ENCODE measurements at regions of chr19 and their contacts with region 1.

Region 1: DNA sequence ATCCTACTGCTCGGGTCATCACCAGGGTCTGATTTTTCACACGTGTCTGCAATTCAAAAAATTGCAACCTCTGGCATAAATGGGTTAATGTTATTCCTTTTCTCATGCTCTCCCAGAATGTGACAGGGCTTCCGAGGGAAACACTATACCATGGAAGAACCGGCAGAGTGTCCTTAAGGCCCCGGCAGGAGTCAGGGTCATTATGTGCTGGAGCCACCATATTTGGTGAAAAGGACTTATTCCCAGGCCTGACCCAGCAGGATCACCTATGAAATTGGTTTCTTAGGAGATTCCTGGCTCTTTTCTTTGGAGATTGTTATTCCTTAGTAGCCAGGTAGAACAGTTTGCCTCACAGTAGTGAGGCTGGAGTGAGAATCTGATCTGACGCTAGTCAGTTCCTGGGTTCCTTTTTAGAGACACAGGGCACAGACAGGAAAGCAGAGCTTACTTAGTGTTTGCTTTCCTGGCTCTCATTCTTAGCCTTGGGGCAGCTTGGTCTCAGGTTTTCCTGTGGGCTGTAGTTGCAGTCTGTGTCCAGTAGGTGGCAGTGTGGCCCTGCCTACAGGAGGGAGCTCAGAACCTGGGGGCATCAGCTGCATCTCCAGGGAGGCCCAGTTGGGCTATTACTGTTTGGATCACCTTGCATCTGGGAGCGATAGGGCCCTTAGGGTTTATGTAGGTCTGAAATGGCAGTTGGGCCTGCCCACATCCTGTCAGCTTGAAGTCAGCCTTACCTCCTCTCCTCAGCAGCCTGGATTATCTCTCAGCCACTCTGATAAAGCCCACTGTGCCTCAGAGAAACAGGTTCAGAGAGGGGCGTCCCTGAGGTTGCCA is 12.4 kb downstream of the SNRNP70 start:
- DNase-seq: peak; percentile 42 to 86 (median 66)
- ATAC-seq: peak; percentile 82 to 87 (median 84)
- H3K4me3 ChIP-seq: no peak overlapping the region
- H3K4me3 Mint-ChIP-seq: no peak overlapping the region
- H3K27ac ChIP-seq: no peak overlapping the region
- H3K27ac Mint-ChIP-seq: no peak overlapping the region
- H3K4me1 ChIP-seq: peaks cover 0 to 9% of the 10 kb centered on the region in 2 experiments
- H3K4me1 Mint-ChIP-seq: peaks cover 7 to 12% (median 8%) of the 10 kb centered on the region in 3 donors
- H3K27me3 ChIP-seq: no peaks in the 10 kb centered on the region
- H3K27me3 Mint-ChIP-seq: no peaks in the 10 kb centered on the region

Region 2: GRCh38 chr19:49113762-49114629 is 16.3 kb after region 1 on chr19 and contains the start of gene LIN7B:
- CTCF ChIA-PET with region 1: interaction called in 1 of 2 experiments, 15 read pairs
- POLR2A ChIA-PET with region 1: no interaction called
- DNase-seq: peak; percentile 45 to 90 (median 68)
- ATAC-seq: peak; percentile 65 to 70 (median 69)
- H3K4me3 ChIP-seq: peak within 1 kb of the TSS; percentile 60 to 73
- H3K4me3 Mint-ChIP-seq: peak within 1 kb of the TSS; percentile 79 to 85 (median 84)
- H3K27ac ChIP-seq: peak within 1 kb of the TSS; percentile 7
- H3K27ac Mint-ChIP-seq: peak within 1 kb of the TSS; percentile 86 to 89
- H3K4me1 ChIP-seq: peaks cover 6 to 34% of the 10 kb centered on the region in 2 experiments
- H3K4me1 Mint-ChIP-seq: peaks cover 36 to 46% (median 36%) of the 10 kb centered on the region in 3 donors
- H3K27me3 ChIP-seq: no peaks in the 10 kb centered on the region
- H3K27me3 Mint-ChIP-seq: no peaks in the 10 kb centered on the region
- total RNA-seq, gene LIN7B: 8.1 to 17.8 (median 12.9) TPM

Region 3: DNA sequence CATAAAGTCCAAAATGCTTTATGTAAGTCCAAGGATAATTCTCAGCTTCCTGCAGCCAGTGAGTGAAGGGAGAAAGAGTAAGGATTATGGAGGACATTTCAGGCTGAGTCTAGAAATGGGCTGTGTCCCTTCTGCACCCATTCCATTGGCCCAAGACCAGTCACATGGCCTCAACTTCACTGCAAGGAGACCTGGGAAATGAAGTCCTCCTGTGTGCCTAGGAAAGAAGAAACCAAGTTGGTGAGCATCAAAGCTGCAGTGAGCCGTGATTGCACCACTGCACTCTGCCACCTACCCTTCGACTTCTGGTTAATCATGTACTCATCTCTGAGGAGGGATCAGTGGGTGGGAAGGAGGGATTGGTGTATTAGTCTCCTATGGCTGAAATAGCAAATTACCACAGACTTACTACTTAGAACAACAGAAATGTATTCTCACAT is 234.0 kb after region 1 on chr19:
- CTCF ChIA-PET with region 1: no interaction called
- POLR2A ChIA-PET with region 1: no interaction called
- DNase-seq: peak; percentile 19 to 83 (median 60)
- ATAC-seq: peak; percentile 56 to 73 (median 58)
- H3K4me3 ChIP-seq: no peak overlapping the region
- H3K4me3 Mint-ChIP-seq: peak overlapping the region; percentile 6 to 96 (median 34)
- H3K27ac ChIP-seq: peak overlapping the region; percentile 35
- H3K27ac Mint-ChIP-seq: peak overlapping the region; percentile 97 to 99
- H3K4me1 ChIP-seq: peaks cover 29 to 53% of the 10 kb centered on the region in 2 experiments
- H3K4me1 Mint-ChIP-seq: peaks cover 73 to 84% (median 78%) of the 10 kb centered on the region in 3 donors
- H3K27me3 ChIP-seq: no peaks in the 10 kb centered on the region
- H3K27me3 Mint-ChIP-seq: no peaks in the 10 kb centered on the region

Region 4: GRCh38 chr19:50465986-50466771 is 1368.5 kb after region 1 on chr19:
- CTCF ChIA-PET with region 1: no interaction called
- POLR2A ChIA-PET with region 1: no interaction called
- DNase-seq: no peak
- ATAC-seq: no peak
- H3K4me3 ChIP-seq: no peak overlapping the region
- H3K4me3 Mint-ChIP-seq: no peak overlapping the region
- H3K27ac ChIP-seq: no peak overlapping the region
- H3K27ac Mint-ChIP-seq: no peak overlapping the region
- H3K4me1 ChIP-seq: peaks cover 0 to 5% of the 10 kb centered on the region in 2 experiments
- H3K4me1 Mint-ChIP-seq: peaks cover 0 to 3% (median 3%) of the 10 kb centered on the region in 3 donors
- H3K27me3 ChIP-seq: peaks cover 0 to 38% of the 10 kb centered on the region in 2 experiments
- H3K27me3 Mint-ChIP-seq: peaks cover 25 to 26% of the 10 kb centered on the region in 2 donors